ENCODE measurements at regions of chr6 and their contacts with region 1.

Region 1: DNA sequence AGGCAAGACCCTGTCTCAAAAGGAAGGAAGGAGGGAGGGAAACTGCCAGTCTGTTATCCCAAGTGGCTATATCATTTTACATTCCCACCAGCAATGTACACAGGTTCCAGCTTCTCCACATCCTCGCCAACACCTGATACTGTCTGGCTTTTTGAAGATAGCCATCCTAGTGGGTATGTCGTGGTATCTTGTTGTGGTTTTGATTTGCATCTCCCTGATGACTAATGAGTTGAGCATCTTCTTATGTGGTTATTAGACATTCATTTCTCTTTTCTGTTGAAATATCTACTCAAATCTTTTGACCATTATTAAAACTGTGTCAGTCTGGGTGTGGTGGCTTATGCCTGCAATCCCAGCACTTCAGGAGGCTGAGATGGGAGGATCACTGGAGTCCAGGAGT is 47.9 kb upstream of the ARID1B start:
- H3K4me3 ChIP-seq: no peak overlapping the region
- H3K27ac ChIP-seq: no peak overlapping the region
- H3K4me1 ChIP-seq: peaks cover 4% of the 10 kb centered on the region; the same call in 1 of the 2 replicates
- CTCF ChIP-seq: no peak

Region 2: DNA sequence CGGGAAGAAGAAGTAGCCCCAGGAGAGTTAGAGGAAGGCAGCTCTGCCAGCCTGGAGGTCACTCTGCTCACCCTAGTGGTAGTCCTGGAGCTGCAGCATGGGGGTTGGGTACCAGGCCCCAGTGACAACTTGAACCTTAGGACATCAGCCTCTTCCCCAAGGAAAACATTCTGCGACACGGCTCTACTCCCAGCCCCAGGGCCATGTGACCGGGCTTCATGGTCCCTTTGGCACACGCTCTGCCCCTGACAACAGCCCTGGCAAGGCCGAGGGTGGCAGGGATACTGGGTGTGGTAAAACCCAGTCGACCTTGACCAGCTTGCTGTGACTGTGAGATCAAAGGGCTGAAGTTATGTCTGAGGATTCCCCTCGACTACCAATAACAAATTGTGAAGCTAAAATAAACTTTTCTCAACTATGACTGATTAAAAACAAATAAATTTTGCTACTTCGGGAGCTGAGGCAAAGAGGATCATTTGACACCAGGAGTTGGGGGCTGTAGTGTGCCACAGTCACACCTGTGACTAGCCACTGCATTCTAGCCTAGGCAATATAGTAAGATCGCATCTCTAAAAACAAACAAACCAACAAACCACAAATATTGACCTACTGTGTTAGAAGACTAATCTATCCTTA is 23.5 kb after region 1 on chr6:
- CTCF ChIA-PET with region 1: interaction called, 11 read pairs
- POLR2A ChIA-PET with region 1: no interaction called
- H3K4me3 ChIP-seq: no peak overlapping the region
- H3K27ac ChIP-seq: no peak overlapping the region
- H3K4me1 ChIP-seq: no peaks in the 10 kb centered on the region
- CTCF ChIP-seq: peak; percentile 52; the same call in 1 of the 2 replicates

Measured in HEK293 (cell line).